SK-N-SH (cell line): ENCODE measurements at regions of chr7 and their contacts with region 1.

Region 1: DNA sequence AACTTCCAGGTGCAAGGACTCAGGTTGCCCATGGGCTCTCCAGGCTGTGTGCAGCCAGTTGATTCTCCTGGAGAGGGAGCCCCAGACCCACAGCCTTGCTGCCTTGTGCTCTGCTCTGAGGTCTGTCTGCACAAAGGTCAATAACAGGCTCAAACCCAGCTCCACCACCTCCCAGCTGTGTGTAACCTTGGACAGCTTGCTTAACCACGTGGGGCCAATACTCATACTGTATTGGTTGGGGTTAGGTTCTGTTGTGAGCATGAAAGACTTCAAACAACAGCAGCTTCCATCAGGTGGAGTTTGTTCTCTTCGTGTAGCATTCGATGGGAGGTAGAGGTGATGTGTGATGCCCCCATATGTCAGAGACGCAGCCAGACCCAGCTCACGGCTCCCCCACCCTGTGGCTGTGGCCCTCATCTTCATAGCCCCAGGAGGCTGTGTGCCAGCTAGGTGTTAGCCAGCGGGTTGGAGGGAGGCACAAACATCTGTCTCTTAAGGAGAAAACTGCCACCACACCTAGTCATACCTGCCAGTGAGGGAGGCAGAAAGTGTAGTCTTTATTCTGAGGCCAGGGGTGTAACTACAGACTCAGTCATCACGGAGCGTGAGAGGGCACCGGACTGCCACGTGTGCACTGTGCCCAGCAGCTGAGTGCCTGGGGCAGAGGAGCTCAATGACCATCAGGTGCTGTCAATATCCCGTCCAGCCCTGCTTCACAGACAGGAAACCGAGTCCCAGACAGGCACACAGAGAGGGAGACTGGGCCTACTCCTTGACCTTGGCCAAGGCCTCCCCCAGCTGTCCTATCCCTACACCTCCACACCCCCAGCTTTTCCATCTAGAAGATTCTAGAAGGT is 8.1 kb upstream of the POLD2 start:
- DNase-seq: peak; percentile 36
- H3K4me3 ChIP-seq: no peak overlapping the region
- H3K27ac ChIP-seq: no peak overlapping the region
- H3K4me1 ChIP-seq: no peaks in the 10 kb centered on the region; a peak in 1 of 4 replicates
- H3K27me3 ChIP-seq: no peaks in the 10 kb centered on the region
- CTCF ChIP-seq: peak; percentile 50
- EP300 ChIP-seq: no peak
- RAD21 ChIP-seq: peak; percentile 61

Region 2: GRCh38 chr7:44066486-44067063 is 64.8 kb before region 1 on chr7:
- CTCF ChIA-PET with region 1: no interaction called
- POLR2A ChIA-PET with region 1: no interaction called
- DNase-seq: no peak
- H3K4me3 ChIP-seq: no peak overlapping the region
- H3K27ac ChIP-seq: no peak overlapping the region; a peak in 1 of 4 replicates
- H3K4me1 ChIP-seq: peaks cover 4 to 43% of the 10 kb centered on the region in 2 experiments
- H3K27me3 ChIP-seq: no peaks in the 10 kb centered on the region
- CTCF ChIP-seq: no peak
- EP300 ChIP-seq: no peak
- RAD21 ChIP-seq: no peak

Region 3: DNA sequence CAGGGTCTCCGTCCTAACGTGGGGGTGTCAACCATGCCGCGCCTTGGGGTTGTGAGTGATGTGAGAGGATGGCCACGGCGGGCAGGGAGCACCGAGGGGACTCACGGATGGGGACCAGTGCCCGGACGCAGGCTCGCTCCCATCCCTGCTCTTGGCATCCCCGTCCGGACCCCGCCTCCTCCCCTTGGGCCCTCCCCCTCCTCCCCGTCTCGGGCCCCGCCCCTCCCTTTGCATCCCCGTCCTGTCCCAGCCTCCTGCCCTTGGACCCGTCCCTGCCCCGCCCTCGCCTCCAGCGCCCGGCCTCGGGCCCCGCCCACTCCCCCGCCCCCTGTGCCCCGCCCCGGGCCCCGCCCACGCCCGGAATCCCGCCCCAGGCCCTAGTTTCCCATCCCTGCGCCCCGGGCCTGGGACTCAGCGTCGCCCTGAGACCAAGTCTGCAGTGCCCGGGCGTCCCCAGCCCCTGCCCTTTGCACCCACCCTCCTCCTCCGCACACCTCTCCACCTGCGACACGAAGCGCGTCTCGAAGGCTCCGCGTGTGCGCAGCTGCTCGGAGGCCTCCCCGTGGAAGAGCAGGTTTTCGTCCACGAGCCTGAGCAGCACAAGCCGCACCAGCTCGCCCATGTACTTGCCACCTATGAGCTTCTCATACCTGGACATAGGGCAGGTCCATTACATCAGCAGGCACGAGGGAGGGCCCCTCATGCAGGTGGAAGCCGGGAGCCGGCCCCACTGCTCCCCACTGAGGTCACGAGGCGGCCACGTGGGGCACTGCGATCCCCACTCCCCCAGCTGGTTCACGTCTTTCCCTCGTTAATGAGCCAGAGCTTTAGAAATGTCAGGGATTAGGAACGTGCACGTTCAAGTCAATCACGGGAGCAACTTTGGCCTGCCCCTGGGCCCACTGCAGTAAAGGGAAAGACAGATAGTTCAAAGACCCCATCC is 14.8 kb after region 1 on chr7:
- CTCF ChIA-PET with region 1: interaction called, 11 read pairs
- POLR2A ChIA-PET with region 1: no interaction called
- DNase-seq: peak; percentile 99
- H3K4me3 ChIP-seq: peak overlapping the region; percentile 51 to 59
- H3K27ac ChIP-seq: no peak overlapping the region
- H3K4me1 ChIP-seq: peaks cover 0 to 18% of the 10 kb centered on the region in 2 experiments; a peak in 1 of 4 replicates
- H3K27me3 ChIP-seq: no peaks in the 10 kb centered on the region
- CTCF ChIP-seq: no peak
- EP300 ChIP-seq: no peak
- RAD21 ChIP-seq: no peak